HepG2 (cell line): ENCODE measurements at regions of chr5 and their contacts with region 1.

Region 1: GRCh38 chr5:43313035-43313853 is at the start of gene HMGCS1:
- DNase-seq: peak; percentile 98
- ATAC-seq: peak; percentile 96
- H3K4me3 ChIP-seq: peak within 1 kb of the TSS; percentile 88 to 98 (median 88)
- H3K27ac ChIP-seq: peak within 1 kb of the TSS; percentile 94
- H3K4me1 ChIP-seq: peaks cover 48% of the 10 kb centered on the region
- H3K27me3 ChIP-seq: no peaks in the 10 kb centered on the region; a peak in 1 of 5 replicates
- CTCF ChIP-seq: peak; percentile 22; the same call in 1 of the 2 replicates
- EP300 ChIP-seq: peak in 1 of 2 experiments; percentile 78; a peak in 2 of 4 replicates
- POLR2A ChIP-seq: peak; percentile 98 to 99
- RAD21 ChIP-seq: 0 out of 2 replicates have a peak, but pooled peaks have one; percentile 25
- total RNA-seq, gene HMGCS1: 318 and 569 TPM in 2 replicates

Region 2: GRCh38 chr5:43268188-43268820 is 44.9 kb before region 1 on chr5:
- CTCF ChIA-PET with region 1: no interaction called
- POLR2A ChIA-PET with region 1: no interaction called
- in situ Hi-C with region 1: no loop called
- intact Hi-C with region 1: no loop called
- DNase-seq: no peak
- ATAC-seq: no peak
- H3K4me3 ChIP-seq: no peak overlapping the region
- H3K27ac ChIP-seq: no peak overlapping the region
- H3K4me1 ChIP-seq: 0 out of 2 replicates have a peak, but pooled peaks cover 4% of the 10 kb centered on the region
- H3K27me3 ChIP-seq: no peaks in the 10 kb centered on the region
- CTCF ChIP-seq: no peak
- EP300 ChIP-seq: no peak
- POLR2A ChIP-seq: no peak
- RAD21 ChIP-seq: no peak

Region 3: GRCh38 chr5:43298443-43298842 is 14.8 kb before region 1 on chr5:
- CTCF ChIA-PET with region 1: no interaction called
- POLR2A ChIA-PET with region 1: interaction called, 18 read pairs
- in situ Hi-C with region 1: no loop called
- intact Hi-C with region 1: no loop called
- DNase-seq: no peak
- ATAC-seq: no peak
- H3K4me3 ChIP-seq: no peak overlapping the region
- H3K27ac ChIP-seq: no peak overlapping the region
- H3K4me1 ChIP-seq: peaks cover 37% of the 10 kb centered on the region
- H3K27me3 ChIP-seq: no peaks in the 10 kb centered on the region
- CTCF ChIP-seq: no peak
- EP300 ChIP-seq: no peak
- POLR2A ChIP-seq: no peak
- RAD21 ChIP-seq: no peak

Region 4: DNA sequence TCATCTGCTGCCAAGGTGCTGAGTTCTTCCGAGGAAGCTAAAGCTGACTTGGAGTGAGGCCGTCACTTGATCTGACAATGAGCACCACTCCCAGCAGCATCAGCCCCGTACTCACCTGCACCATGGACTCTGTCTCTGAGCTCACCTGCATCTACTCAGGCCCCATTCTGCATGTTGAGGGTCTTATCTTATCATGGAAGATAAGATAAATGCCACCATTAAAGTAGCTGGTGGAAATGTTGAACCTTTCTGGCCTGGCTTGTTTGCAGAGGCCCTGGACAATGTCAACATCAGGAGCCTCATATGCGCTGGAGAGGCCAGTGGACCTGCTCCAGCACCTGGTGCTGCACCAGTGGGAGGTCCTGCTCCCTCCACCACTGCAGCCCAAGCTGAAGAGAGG is 35.0 kb after region 1 on chr5:
- CTCF ChIA-PET with region 1: no interaction called
- POLR2A ChIA-PET with region 1: interaction called, 8 read pairs
- in situ Hi-C with region 1: no loop called
- intact Hi-C with region 1: loop called (anchors 1 kb)
- DNase-seq: peak; percentile 36
- ATAC-seq: peak; percentile 94
- H3K4me3 ChIP-seq: 0 out of 6 replicates have a peak overlapping the region, but pooled peaks of 1 of the 3 experiments have one; percentile 18
- H3K27ac ChIP-seq: no peak overlapping the region
- H3K4me1 ChIP-seq: peaks cover 24% of the 10 kb centered on the region
- H3K27me3 ChIP-seq: 0 out of 5 replicates have a peak, but pooled peaks cover 0 to 6% of the 10 kb centered on the region in 2 experiments
- CTCF ChIP-seq: no peak
- EP300 ChIP-seq: peak in 1 of 2 experiments; percentile 64; a peak in 1 of 4 replicates
- POLR2A ChIP-seq: no peak
- RAD21 ChIP-seq: no peak

Region 5: GRCh38 chr5:43973318-43973717 is 660.1 kb after region 1 on chr5:
- CTCF ChIA-PET with region 1: no interaction called
- POLR2A ChIA-PET with region 1: no interaction called
- in situ Hi-C with region 1: no loop called
- intact Hi-C with region 1: no loop called
- DNase-seq: peak; percentile 61
- ATAC-seq: peak; percentile 80
- H3K4me3 ChIP-seq: no peak overlapping the region
- H3K27ac ChIP-seq: no peak overlapping the region
- H3K4me1 ChIP-seq: peaks cover 8% of the 10 kb centered on the region; the same call in 1 of the 2 replicates
- H3K27me3 ChIP-seq: no peaks in the 10 kb centered on the region
- CTCF ChIP-seq: no peak
- EP300 ChIP-seq: peak in 1 of 2 experiments; percentile 26; a peak in 1 of 4 replicates
- POLR2A ChIP-seq: no peak
- RAD21 ChIP-seq: no peak